GM10248 (cell line): ENCODE measurements at regions of chr14 and their contacts with region 1.

Region 1: DNA sequence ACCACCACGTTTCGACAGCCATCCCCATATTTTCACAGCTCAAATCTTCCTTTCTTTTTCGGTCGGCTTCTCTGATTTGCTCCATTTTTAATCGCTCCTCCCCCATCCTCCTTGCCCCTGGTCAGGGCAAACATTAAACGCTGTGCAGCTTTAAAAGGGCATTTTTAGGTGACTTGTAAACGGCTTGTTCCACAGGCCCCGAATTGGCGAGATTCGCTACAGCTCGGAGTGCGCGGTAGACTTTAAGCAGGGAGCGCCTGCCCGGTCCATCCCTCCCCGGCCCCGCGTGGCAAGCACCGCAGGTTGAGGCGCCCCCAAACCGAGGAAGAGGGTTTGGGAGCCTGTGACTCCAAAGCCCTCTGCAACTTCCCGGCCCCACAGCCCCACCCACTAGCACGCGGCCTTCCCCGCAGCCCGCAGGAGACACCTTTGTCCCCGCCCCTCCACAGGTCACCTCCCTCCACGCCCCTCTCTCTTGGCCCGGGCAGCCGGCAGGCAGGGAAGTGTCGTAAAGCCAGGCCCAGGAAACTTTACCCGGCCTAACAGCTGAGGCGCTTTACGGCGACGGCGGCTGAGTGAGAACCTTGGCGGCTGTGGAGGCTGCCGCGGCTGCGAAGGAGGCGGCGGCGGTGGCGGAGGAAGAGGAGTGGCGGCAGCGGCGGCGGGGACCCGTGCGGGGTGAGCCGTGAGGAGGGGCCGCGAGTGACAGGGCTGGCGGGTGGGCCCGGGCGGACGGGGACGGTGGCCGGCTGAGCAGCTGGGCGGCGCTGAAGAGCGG is at the start of gene NAA30:
- DNase-seq: peak; percentile 94
- CTCF ChIP-seq: no peak

Region 2: GRCh38 chr14:57209561-57209960 is 180.7 kb before region 1 on chr14:
- CTCF ChIA-PET with region 1: no interaction called
- POLR2A ChIA-PET with region 1: no interaction called
- DNase-seq: no peak
- CTCF ChIP-seq: no peak

Region 3: DNA sequence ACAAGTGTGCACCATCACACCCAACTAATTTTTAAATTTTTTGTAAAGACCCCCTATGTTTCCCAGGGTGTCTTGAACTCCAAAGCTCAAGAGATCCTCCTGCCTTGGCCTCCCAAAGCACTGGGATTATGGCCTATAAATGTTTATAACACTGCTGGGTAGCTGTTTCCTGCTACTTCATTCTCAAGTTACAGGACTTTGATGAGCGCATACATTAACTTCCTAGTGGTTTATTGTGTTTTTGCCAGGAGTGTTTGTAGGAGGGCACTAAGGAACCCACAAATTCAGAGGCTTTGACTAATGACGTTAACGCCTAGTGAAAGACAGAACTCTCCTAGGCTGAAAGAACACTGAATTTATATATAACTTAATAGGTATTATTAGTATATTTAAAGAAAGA is 15.1 kb before region 1 on chr14:
- CTCF ChIA-PET with region 1: interaction called, 11 read pairs
- POLR2A ChIA-PET with region 1: no interaction called
- DNase-seq: no peak
- CTCF ChIP-seq: no peak

Region 4: DNA sequence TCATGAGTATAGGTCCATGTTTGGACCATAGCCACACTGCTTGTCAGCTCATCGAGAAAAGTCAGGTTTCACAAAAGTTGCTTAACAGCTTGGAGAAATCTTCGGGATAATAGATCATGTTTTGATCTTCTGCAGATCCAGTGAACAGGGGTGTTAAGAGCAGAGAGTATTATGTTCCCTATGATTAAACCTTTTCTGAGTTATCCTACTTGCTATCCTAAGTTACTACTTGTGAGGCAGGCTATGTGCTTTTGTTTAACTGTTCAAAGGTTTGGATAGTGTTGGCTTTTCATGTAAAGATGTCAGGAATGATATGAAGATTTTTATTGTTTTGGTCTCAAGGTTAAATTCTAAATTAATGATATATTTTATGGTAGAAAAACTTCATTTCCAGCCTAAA is 11.3 kb after region 1 on chr14:
- CTCF ChIA-PET with region 1: interaction called, 16 read pairs
- POLR2A ChIA-PET with region 1: no interaction called
- DNase-seq: no peak
- CTCF ChIP-seq: no peak

Region 5: GRCh38 chr14:57435923-57436322 is 45.7 kb after region 1 on chr14:
- CTCF ChIA-PET with region 1: no interaction called
- POLR2A ChIA-PET with region 1: no interaction called
- DNase-seq: no peak
- CTCF ChIP-seq: no peak